ENCODE measurements at regions of chr1 and their contacts with region 1.

Region 1: DNA sequence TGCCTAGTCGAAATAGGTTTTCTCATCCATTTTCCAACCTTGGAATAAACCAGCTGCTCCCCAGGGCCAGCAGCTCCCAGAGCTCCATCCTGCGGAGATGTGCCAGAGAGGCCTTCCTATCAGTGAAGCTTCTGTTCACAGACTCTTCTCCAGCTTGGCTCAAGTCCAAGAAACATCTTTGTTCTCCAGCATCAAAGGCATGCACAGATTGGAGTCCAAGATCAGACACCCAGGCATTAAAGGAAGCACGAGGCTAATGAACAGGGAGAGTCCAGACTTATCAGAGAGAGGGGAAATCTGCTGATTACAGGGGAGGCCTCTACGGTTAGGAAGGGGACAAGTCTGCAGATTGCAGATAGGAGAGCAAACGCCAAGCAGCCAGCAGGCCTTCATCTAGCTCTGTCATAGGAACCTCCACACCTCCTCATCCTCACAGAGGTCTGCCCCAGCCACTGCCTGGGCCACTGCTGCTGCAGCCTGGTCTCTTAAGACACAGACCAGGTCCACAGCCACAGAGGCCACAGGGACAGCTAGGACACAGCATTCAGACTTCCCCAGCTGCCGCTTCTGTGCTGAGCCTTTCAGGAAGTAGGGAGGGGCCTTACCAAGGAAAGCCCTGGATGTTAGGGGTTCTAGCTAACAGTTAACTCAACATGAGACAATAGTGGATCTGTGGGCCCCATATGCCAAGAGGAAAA is 3.4 kb downstream of the PRR9 start:
- DNase-seq: no peak
- H3K4me3 ChIP-seq: no peak overlapping the region
- H3K27ac ChIP-seq: no peak overlapping the region
- H3K4me1 ChIP-seq: no peaks in the 10 kb centered on the region
- H3K27me3 ChIP-seq: no peaks in the 10 kb centered on the region
- CTCF ChIP-seq: no peak

Region 2: GRCh38 chr1:152869808-152870419 is 350.8 kb before region 1 on chr1:
- intact Hi-C with region 1: loop called (anchors 10 kb)
- DNase-seq: peak; percentile 69
- H3K4me3 ChIP-seq: no peak overlapping the region
- H3K27ac ChIP-seq: no peak overlapping the region
- H3K4me1 ChIP-seq: no peaks in the 10 kb centered on the region
- H3K27me3 ChIP-seq: no peaks in the 10 kb centered on the region
- CTCF ChIP-seq: peak; percentile 53

Region 3: DNA sequence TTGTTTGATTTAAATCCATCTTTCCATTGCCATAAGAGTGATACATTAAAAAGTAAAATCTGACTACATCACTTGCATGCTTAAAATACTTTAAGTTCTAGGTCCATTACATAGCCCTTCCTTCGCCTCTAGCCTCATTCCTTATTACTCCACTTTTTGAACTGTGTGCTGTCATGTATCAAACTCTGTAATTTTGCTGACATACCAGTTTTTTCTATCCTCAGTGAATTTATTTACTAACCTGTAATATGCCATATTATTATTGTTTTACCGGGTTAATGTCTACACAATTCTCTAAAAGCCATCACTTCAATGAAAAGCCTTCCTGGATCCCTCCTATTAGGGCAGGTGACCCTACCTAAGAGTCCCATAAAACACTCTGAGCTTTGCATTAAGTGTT is 65.2 kb before region 1 on chr1:
- intact Hi-C with region 1: no loop called
- DNase-seq: no peak
- H3K4me3 ChIP-seq: no peak overlapping the region
- H3K27ac ChIP-seq: no peak overlapping the region
- H3K4me1 ChIP-seq: no peaks in the 10 kb centered on the region
- H3K27me3 ChIP-seq: no peaks in the 10 kb centered on the region
- CTCF ChIP-seq: no peak